ENCODE measurements at regions of chr10 and their contacts with region 1.

Region 1: DNA sequence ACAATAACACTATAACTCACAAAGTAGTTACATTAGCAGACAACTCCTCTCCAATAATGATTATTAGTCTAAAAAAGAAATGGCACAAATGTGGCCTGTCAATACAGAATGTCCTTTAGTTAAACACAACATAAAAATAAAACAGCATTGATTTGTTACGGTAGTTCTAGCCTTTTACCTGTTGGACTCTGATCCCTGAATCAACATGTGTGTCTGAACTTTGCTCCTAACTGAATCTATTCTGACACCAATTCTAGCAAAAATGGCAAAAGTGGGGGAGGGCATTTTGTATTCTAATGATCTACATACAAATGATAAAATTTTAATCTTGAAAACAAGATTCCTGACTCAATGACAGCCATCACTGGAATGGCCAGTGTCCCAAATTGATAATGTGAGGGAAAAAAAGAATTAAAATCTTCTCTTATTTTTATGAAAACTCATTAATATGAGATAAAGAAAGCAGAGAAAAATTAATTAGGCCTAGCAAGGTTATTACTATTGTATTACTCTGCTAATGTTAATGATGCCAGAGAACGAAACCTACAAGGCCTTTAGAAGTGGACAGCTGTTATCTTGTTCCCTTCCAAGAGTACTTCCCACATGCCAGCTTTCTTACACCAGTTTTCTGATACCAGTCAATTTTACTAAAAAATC is 30.2 kb downstream of the FRA10AC1 start:
- DNase-seq: no peak
- ATAC-seq: no peak
- H3K4me3 ChIP-seq: no peak overlapping the region
- H3K27ac ChIP-seq: no peak overlapping the region
- H3K4me1 ChIP-seq: no peaks in the 10 kb centered on the region
- H3K27me3 ChIP-seq: no peaks in the 10 kb centered on the region
- CTCF ChIP-seq: no peak
- POLR2A ChIP-seq: no peak
- RAD21 ChIP-seq: no peak

Region 2: DNA sequence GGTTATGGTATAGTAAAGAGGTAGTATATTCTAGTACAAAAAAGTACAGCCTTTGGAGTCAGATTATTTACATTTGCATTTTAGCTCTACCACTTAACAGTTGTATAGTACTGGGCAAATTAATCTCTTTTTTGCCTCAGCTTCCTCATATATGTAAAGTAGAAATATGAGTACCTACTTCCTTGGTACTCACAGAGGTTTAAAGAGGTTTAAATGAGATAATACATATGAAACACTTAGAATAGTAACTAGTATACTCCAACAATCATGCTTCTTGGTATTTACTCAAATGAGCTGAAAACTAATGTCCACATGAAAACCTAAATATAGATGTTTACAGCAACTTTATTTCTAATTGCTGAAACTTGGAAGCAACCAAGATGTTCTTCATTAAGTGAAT is 15.6 kb after region 1 on chr10:
- CTCF ChIA-PET with region 1: no interaction called
- POLR2A ChIA-PET with region 1: no interaction called
- dilution Hi-C with region 1: no loop called
- in situ Hi-C with region 1: no loop called
- intact Hi-C with region 1: loop called (anchors 2 kb)
- DNase-seq: no peak
- ATAC-seq: no peak
- H3K4me3 ChIP-seq: no peak overlapping the region
- H3K27ac ChIP-seq: no peak overlapping the region
- H3K4me1 ChIP-seq: no peaks in the 10 kb centered on the region
- H3K27me3 ChIP-seq: no peaks in the 10 kb centered on the region
- CTCF ChIP-seq: no peak
- POLR2A ChIP-seq: no peak
- RAD21 ChIP-seq: no peak

Measured in IMR-90 (cell line).